ENCODE measurements at regions of chr3 and their contacts with region 1.

Region 1: GRCh38 chr3:137219801-137220445 is 262.1 kb downstream of the IL20RB start:
- DNase-seq: no peak
- H3K4me3 ChIP-seq: no peak overlapping the region
- H3K27ac ChIP-seq: no peak overlapping the region
- H3K4me1 ChIP-seq: no peaks in the 10 kb centered on the region
- H3K27me3 ChIP-seq: no peaks in the 10 kb centered on the region
- CTCF ChIP-seq: no peak

Region 2: DNA sequence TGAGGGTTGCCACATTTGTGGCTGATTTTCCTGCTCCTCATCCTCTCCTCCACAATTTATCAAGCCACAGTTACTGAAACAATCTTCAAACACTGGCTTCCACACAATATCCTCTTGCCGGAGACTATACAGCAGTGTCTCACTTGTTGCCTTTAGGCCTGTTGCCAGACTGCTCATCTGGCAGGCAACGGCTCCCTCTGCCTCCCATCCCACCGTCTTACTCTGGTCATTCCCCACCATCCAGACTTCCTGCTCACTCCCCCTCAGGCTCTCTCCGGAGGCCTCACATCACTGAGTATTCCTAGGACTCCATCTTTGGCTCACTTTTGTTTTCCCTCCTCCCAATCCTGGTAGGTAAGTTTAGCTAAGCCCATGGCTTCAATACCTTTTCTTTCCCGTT is 39.8 kb after region 1 on chr3:
- CTCF ChIA-PET with region 1: interaction called, 13 read pairs
- POLR2A ChIA-PET with region 1: no interaction called
- intact Hi-C with region 1: no loop called
- DNase-seq: no peak
- H3K4me3 ChIP-seq: no peak overlapping the region
- H3K27ac ChIP-seq: no peak overlapping the region
- H3K4me1 ChIP-seq: no peaks in the 10 kb centered on the region
- H3K27me3 ChIP-seq: peaks cover 17% of the 10 kb centered on the region
- CTCF ChIP-seq: no peak